Naive thymus-derived CD8-positive, alpha-beta T cell (primary cell): ENCODE measurements at regions of chr10 and their contacts with region 1.

Region 1: GRCh38 chr10:22316285-22317120 is at the start of gene COMMD3:
- DNase-seq: peak; percentile 63 to 86 (median 75)
- ATAC-seq: peak; percentile 63 to 64
- H3K4me3 Mint-ChIP-seq: peak within 1 kb of the TSS; percentile 88 to 99 (median 93)
- H3K27ac Mint-ChIP-seq: peak within 1 kb of the TSS; percentile 93 to 98 (median 96)
- H3K4me1 Mint-ChIP-seq: peaks cover 6 to 48% (median 20%) of the 10 kb centered on the region in 4 donors
- H3K27me3 Mint-ChIP-seq: peaks cover 0 to 18% (median 11%) of the 10 kb centered on the region in 5 donors
- polyA plus RNA-seq, gene COMMD3: 38.5 to 57.8 (median 48.4) TPM

Region 2: GRCh38 chr10:22251751-22252223 is 64.7 kb before region 1 on chr10:
- POLR2A ChIA-PET with region 1: interaction called, 25 read pairs
- DNase-seq: peak in 9 of 10 donors; percentile 22 to 79 (median 49)
- ATAC-seq: peak; percentile 62 to 66
- H3K4me3 Mint-ChIP-seq: peak overlapping the region; percentile 91 to 99 (median 97)
- H3K27ac Mint-ChIP-seq: peak overlapping the region; percentile 96 to 100 (median 98)
- H3K4me1 Mint-ChIP-seq: peaks cover 5 to 44% (median 14%) of the 10 kb centered on the region in 4 donors
- H3K27me3 Mint-ChIP-seq: peaks cover 5 to 30% (median 23%) of the 10 kb centered on the region in 5 donors

Region 3: GRCh38 chr10:22285130-22285529 is 31.4 kb before region 1 on chr10:
- POLR2A ChIA-PET with region 1: no interaction called
- DNase-seq: no peak
- ATAC-seq: no peak
- H3K4me3 Mint-ChIP-seq: no peak overlapping the region
- H3K27ac Mint-ChIP-seq: no peak overlapping the region
- H3K4me1 Mint-ChIP-seq: no peaks in the 10 kb centered on the region
- H3K27me3 Mint-ChIP-seq: peaks cover 2 to 13% (median 9%) of the 10 kb centered on the region in 5 donors

Region 4: GRCh38 chr10:22333167-22333974 is 16.9 kb after region 1 on chr10:
- POLR2A ChIA-PET with region 1: interaction called, 17 read pairs
- DNase-seq: peak in 3 of 10 donors; percentile 67 to 73 (median 70)
- ATAC-seq: peak; percentile 15 to 20
- H3K4me3 Mint-ChIP-seq: peak overlapping the region; percentile 68 to 84 (median 81)
- H3K27ac Mint-ChIP-seq: peak overlapping the region; percentile 68 to 92 (median 87)
- H3K4me1 Mint-ChIP-seq: peaks cover 8 to 37% (median 26%) of the 10 kb centered on the region in 4 donors
- H3K27me3 Mint-ChIP-seq: peaks cover 8 to 49% (median 28%) of the 10 kb centered on the region in 5 donors

Region 5: DNA sequence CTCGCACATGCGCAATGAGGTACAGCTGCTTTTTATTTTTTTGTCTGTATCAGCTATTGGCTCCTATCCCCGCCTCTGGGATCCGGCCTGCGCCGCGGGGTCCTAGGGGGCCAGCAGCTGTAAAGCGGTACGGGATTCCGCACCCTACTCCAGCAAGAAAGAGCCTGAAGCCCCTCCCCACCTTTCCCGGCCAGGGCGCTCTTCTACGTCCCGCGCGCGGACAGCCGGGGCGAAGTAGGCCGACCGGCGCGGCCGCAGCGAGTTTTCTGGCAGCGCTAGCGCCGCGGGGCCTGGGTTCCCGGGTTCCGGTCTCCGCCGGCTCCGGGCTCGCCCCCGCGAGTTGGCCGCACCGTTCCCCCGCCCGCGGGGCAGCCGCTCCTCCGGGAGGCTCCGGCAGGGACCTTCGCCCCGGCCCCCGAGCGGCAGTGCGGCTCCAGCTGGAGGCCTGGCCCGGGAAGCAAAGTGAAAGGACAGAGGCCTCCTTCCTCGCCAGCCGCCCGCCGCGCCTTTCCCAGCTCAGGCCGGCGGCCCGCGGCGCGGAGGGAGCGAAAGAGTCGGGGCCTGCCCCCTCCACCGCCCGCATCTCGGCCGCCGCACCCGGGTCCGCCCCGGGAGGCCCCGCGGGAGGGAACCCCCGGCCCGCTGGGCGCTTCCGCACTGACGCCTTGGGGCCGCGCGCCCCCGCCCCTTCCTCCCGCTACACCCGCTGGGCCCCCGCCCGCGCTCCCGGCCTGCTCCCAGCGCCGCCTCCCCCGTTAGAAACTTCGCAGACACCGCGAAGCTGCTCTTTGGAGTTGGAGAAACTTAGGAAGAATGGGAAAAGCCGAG is 24.1 kb after region 1 on chr10:
- POLR2A ChIA-PET with region 1: interaction called, 12 read pairs
- DNase-seq: peak in 9 of 10 donors; percentile 30 to 74 (median 53)
- ATAC-seq: peak; percentile 45 to 48
- H3K4me3 Mint-ChIP-seq: peak overlapping the region; percentile 70 to 91 (median 84)
- H3K27ac Mint-ChIP-seq: peak overlapping the region; percentile 39 to 90 (median 84)
- H3K4me1 Mint-ChIP-seq: peaks cover 2 to 38% (median 14%) of the 10 kb centered on the region in 4 donors
- H3K27me3 Mint-ChIP-seq: peaks cover 21 to 74% (median 71%) of the 10 kb centered on the region in 5 donors